GM23248 (cell line): ENCODE measurements at regions of chr15 and their contacts with region 1.

Region 1: DNA sequence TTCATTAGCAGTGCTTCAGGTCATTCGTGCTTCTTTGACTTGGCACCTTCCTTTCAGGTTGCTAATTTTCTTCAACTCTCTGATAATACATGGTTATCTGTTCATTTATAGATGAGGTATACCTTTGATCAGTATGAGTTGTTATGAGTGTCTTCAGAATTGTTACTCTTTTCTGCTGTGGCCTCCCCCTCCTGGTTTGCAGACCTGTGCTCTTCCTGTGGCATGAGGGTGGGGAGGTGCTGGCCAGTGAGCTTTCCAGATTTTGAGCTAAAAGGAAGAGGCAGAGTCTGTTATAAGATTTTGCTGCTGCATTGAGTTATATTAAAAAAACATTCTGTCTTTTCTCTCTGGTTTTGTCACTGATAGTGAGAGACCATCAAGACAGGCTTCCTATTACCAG is 30.8 kb upstream of the GOLGA6L9 start:
- DNase-seq: no peak
- H3K4me3 ChIP-seq: no peak overlapping the region
- H3K27ac ChIP-seq: no peak overlapping the region
- H3K4me1 ChIP-seq: peaks cover 7% of the 10 kb centered on the region
- H3K27me3 ChIP-seq: no peaks in the 10 kb centered on the region

Region 2: GRCh38 chr15:82298520-82298919 is 100.3 kb before region 1 on chr15:
- in situ Hi-C with region 1: loop called (anchors 25 kb)
- DNase-seq: no peak
- H3K4me3 ChIP-seq: no peak overlapping the region
- H3K27ac ChIP-seq: no peak overlapping the region
- H3K4me1 ChIP-seq: no peaks in the 10 kb centered on the region
- H3K27me3 ChIP-seq: peaks cover 7% of the 10 kb centered on the region; the same call in 1 of the 2 replicates

Region 3: DNA sequence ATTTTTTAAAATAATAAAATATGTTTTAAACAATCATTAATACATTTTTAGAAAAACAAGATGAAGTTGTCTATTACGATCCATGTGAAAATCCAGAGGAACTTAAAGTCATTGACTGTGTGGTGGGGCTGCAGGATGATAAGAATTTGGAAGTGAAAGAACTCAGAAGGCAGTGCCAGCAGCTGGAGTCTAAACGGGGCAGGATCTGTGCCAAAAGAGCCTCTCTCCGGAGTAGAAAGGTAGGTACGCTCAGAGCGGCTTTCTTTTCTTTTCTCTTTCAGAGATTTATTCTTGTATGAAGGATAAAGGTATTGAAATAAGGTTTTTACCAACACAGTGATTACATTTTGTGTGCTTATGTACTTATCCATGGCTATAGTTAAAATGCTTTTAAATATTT is 424.3 kb after region 1 on chr15:
- in situ Hi-C with region 1: no loop called
- DNase-seq: no peak
- H3K4me3 ChIP-seq: no peak overlapping the region
- H3K27ac ChIP-seq: no peak overlapping the region
- H3K4me1 ChIP-seq: peaks cover 18% of the 10 kb centered on the region
- H3K27me3 ChIP-seq: no peaks in the 10 kb centered on the region